CD14-positive monocyte (primary cell): ENCODE measurements at regions of chr7 and their contacts with region 1.

Region 1: GRCh38 chr7:5450549-5451372 is 27.1 kb upstream of the TNRC18 start:
- DNase-seq: peak in 2 of 3 donors; percentile 51 to 58
- H3K4me3 ChIP-seq: no peak overlapping the region
- H3K4me3 Mint-ChIP-seq: no peak overlapping the region
- H3K27ac ChIP-seq: no peak overlapping the region
- H3K27ac Mint-ChIP-seq: peak overlapping the region in 2 of 7 donors; percentile 4 to 64
- H3K4me1 ChIP-seq: peaks cover 7% of the 10 kb centered on the region in 2 donors
- H3K4me1 Mint-ChIP-seq: peaks cover 11% of the 10 kb centered on the region
- H3K27me3 ChIP-seq: peaks cover 0 to 4% of the 10 kb centered on the region in 2 donors
- H3K27me3 Mint-ChIP-seq: peaks cover 11 to 22% (median 18%) of the 10 kb centered on the region in 3 donors
- CTCF ChIP-seq: peak; percentile 92

Region 2: DNA sequence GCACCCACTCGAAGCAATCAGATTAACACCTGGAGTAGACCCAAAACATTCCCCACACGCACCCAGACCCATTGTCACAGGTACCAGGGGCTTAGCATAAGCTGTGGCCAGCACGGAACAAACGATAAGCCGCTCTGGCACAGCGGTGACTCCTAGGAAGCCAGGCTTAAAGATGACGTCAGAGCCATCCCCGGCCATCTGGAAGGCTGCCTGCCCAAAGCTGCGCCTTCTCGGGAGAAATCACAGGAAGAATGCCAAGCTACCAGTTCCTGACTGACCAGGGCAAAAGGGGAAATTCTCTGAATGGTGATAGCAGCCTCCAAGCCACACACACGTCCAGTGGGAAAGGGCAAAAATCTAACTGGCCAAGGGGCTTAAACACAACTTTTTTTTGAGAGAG is 273.7 kb before region 1 on chr7:
- intact Hi-C with region 1: no loop called
- DNase-seq: no peak
- H3K4me3 ChIP-seq: no peak overlapping the region
- H3K4me3 Mint-ChIP-seq: no peak overlapping the region
- H3K27ac ChIP-seq: no peak overlapping the region
- H3K27ac Mint-ChIP-seq: no peak overlapping the region
- H3K4me1 ChIP-seq: peaks cover 0 to 3% of the 10 kb centered on the region in 2 donors
- H3K4me1 Mint-ChIP-seq: peaks cover 7% of the 10 kb centered on the region
- H3K27me3 ChIP-seq: peaks cover 0 to 8% of the 10 kb centered on the region in 2 donors
- H3K27me3 Mint-ChIP-seq: peaks cover 3 to 29% (median 7%) of the 10 kb centered on the region in 3 donors
- CTCF ChIP-seq: no peak

Region 3: DNA sequence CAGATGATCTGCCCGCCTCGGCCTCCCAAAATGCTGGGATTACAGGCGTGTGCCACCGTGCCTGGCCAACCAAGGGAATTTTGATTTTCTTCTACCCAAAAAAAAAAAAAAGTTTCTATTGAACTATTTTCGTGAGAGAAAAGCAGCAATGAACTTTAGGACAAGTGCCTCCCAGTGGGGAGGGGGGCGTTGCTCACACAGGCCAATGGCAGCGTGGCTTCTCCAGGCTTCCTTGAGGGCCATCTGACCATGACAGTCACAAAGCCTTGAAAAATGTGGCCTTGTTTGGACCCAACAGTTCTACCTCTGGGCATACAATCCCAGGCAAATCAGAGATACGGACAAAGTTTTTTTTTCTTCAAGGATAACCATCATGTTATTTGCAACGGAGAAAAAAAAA is 83.1 kb before region 1 on chr7:
- intact Hi-C with region 1: loop called (anchors 2 to 5 kb)
- DNase-seq: no peak
- H3K4me3 ChIP-seq: no peak overlapping the region
- H3K4me3 Mint-ChIP-seq: no peak overlapping the region
- H3K27ac ChIP-seq: no peak overlapping the region
- H3K27ac Mint-ChIP-seq: peak overlapping the region in 1 of 7 donors; percentile 46
- H3K4me1 ChIP-seq: no peaks in the 10 kb centered on the region
- H3K4me1 Mint-ChIP-seq: peaks cover 7% of the 10 kb centered on the region
- H3K27me3 ChIP-seq: no peaks in the 10 kb centered on the region
- H3K27me3 Mint-ChIP-seq: peaks cover 0 to 3% (median 0%) of the 10 kb centered on the region in 3 donors
- CTCF ChIP-seq: no peak

Region 4: DNA sequence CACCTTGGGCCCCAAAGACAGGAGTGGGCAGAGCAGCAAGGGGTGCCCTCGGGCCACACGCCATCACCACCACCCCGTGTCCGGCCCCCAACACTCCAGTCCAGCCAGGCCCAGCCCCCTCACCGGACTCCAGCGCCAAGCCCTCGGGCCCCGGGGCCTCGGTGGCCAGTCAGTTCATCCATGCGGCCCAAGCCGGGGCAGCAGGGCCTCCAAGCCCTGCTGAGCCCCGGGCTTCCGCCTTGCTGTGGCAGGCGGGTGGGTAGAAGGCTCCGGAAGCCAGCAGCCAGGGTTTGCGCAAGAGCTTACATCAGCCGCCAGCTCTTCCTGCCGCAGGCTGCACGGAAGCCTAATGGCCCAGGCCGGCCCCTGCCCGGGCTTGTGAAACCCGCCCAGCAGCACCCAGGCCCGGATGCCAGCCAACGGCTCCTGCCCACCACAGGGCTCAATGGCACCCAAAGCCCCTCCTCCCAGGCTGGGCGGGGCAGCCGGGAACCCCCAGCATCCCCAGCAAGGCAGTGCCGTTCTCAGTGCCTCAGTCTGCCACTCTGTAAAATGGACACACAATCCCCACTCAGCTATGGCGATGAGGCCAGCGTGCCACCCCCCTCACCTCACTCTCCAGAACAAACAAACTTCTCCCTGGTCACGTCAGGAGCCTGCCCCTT is 53.6 kb before region 1 on chr7:
- intact Hi-C with region 1: loop called in 1 of 2 experiments (anchors 2 kb)
- DNase-seq: peak; percentile 97 to 99 (median 99)
- H3K4me3 ChIP-seq: peak overlapping the region; percentile 59 to 84 (median 66)
- H3K4me3 Mint-ChIP-seq: peak overlapping the region; percentile 75 to 84
- H3K27ac ChIP-seq: peak overlapping the region; percentile 68 to 94
- H3K27ac Mint-ChIP-seq: peak overlapping the region; percentile 94 to 99 (median 98)
- H3K4me1 ChIP-seq: peaks cover 30 to 33% of the 10 kb centered on the region in 2 donors
- H3K4me1 Mint-ChIP-seq: peaks cover 44% of the 10 kb centered on the region
- H3K27me3 ChIP-seq: no peaks in the 10 kb centered on the region
- H3K27me3 Mint-ChIP-seq: peaks cover 0 to 2% (median 0%) of the 10 kb centered on the region in 3 donors
- CTCF ChIP-seq: no peak

Region 5: GRCh38 chr7:5743803-5744202 is 293.0 kb after region 1 on chr7:
- intact Hi-C with region 1: no loop called
- DNase-seq: no peak
- H3K4me3 ChIP-seq: no peak overlapping the region
- H3K4me3 Mint-ChIP-seq: no peak overlapping the region
- H3K27ac ChIP-seq: no peak overlapping the region
- H3K27ac Mint-ChIP-seq: peak overlapping the region in 1 of 7 donors; percentile 52
- H3K4me1 ChIP-seq: no peaks in the 10 kb centered on the region
- H3K4me1 Mint-ChIP-seq: no peaks in the 10 kb centered on the region
- H3K27me3 ChIP-seq: no peaks in the 10 kb centered on the region
- H3K27me3 Mint-ChIP-seq: no peaks in the 10 kb centered on the region
- CTCF ChIP-seq: no peak